ENCODE measurements at regions of chr9 and their contacts with region 1.

Region 1: DNA sequence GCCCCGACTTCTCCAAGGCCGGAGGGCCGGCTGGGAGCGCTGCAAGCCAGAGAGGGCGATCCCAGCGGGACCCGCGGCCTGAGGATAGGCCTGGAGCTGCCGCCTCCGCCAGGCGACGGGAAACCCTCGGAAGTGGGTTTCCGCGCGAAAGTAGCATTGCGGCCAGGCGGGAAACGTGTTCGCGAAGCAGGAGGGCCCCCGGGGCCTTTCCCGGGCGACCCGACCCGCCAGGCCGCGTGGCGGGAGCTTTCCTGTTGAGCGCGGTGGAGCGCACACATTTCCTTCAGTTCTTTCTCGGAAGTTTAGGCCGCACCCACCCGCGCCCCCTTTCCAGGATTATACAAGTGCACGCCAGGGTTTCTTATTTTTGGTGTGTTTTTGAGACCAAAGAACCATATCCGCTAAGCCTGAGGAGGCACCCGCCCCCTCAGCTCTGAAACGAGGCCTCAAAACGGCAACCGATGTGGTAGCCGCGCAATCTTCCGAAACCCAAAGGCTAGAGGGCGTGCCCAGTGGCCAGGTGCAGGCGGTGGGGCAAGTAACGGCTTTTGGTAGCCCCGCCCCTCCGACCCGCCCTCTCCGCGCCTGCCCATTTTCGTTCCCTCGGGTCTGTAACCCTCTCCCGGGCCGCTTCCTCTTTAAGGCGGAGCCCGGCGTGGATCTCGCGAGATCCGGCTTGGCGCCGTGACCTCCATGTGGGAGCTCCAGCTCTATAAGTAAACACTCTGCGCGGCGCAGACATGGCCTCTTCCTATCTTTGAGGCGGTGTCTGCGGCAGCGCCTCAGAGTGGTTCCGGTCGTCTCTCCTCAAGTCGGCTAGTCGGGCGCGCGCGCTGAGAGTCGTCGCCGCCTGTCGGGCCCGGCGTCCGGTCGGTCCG is at the start of gene UHRF2:
- DNase-seq: peak; percentile 95 to 99 (median 98)

Region 2: GRCh38 chr9:5953743-5954707 is 458.7 kb before region 1 on chr9:
- intact Hi-C with region 1: no loop called
- DNase-seq: peak in 2 of 42 donors; percentile 5 to 8

Region 3: DNA sequence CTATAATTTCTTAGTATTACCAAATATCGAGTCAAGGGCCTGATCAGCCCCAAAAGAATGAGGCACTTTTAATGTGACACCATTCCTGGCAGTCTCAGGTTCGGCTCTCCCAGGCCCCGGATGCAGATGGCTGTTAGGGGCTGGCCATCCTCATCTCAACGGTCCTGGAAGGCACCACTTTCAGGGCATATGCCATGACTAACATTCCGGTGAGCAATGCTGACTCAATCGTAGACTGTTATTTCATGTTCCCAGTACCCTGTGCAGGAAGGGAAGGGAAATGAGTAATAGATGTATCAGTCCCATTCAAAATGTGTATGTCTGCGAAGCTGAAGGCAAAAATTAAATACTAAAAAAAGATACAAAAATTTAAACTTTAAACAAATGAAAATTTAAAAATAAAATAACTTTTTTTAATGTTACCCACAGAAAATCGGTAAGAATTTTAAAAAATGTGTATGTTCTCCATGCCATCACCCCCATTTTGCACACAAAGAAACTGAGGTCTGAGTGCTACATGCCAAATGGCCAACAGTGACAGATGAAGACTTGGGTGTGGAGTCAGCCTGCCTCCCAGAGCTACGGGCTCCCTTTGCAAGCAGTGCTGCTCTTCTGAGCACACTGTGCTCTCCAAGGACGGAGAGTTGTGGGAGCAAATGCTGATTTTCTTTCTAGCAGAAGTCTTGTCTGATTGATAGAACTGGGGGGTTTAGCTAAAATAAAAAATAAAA is 153.8 kb after region 1 on chr9:
- intact Hi-C with region 1: loop called (anchors 5 kb)
- DNase-seq: peak in 31 of 42 donors; percentile 12 to 83 (median 42)

Region 4: DNA sequence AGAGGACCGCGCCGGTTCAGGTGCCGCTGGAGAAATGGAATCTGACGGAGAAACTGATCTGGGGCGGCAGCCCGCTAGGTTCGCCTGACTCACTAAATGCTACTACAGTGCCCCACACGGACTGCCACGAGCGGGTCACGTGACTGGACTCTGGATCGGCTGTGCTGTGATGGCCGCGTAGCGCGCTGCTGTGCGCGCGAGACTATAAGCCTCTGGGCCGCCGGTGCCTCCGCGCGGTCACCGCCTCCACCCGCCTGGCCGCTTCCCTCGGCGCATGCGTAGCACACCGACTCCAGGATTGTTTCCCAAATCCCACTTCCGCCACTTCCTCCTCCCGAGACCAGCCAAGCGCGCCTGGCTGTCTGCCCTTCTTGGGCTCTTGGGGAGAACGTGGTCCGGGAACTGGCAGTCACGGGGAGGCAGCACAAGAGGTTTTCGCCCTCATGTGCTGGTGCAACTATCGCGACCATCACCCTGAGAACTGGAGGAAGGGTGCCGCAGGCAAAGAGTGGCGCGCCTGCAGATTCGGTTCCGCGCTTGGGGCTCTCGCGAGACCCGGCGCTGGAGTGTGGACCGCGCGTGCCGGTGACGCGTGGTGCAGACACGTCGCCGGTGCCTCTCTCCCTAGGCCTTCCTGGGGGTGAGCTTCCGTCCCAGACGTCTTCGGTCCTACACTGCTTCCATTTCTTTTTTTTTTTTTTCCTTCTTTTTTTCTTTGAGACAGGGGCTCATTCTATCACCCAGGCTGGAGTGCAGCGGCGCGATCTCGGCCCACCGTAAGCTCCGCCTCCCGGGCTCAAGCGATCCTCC is 268.6 kb after region 1 on chr9:
- intact Hi-C with region 1: loop called (anchors 2 kb)
- DNase-seq: peak; percentile 93 to 98 (median 97)